Caco-2 (cell line): ENCODE measurements at regions of chr4 and their contacts with region 1.

Region 1: DNA sequence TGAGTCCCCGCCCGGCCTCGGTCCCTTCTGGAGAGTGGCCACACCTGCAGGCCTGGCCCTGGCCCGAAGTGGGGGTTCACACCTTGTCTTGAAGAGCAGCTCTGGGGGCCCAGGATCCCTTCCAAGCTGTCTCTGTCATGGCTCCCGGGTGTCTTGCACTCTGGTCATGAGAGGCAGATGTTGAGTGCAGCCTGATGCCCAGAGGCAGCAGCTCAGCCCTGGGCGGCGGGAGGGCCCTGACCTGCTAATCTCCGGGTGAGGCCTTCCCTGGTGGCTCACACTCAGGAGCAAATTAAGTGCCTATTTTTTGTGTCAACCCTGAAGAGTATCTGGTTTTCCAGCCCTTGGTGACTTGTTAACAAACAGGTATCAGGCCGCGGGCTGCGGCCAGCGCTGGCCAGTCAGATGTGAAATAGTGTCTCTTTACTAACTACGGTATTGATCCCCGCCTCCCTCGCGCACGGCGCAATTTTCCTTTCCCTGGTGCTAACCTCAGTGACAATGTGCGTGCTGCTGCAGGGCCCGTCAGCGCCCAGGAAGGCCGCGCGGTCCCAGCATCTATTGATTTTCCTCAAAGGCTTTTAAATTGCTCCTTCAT is 24.2 kb downstream of the NKX1-1 start:
- DNase-seq: no peak
- H3K4me3 ChIP-seq: no peak overlapping the region
- H3K4me3 Mint-ChIP-seq: no peak overlapping the region
- H3K27ac Mint-ChIP-seq: no peak overlapping the region
- H3K4me1 ChIP-seq: no peaks in the 10 kb centered on the region
- H3K4me1 Mint-ChIP-seq: no peaks in the 10 kb centered on the region
- H3K27me3 ChIP-seq: no peaks in the 10 kb centered on the region
- H3K27me3 Mint-ChIP-seq: no peaks in the 10 kb centered on the region
- CTCF ChIP-seq: no peak

Region 2: DNA sequence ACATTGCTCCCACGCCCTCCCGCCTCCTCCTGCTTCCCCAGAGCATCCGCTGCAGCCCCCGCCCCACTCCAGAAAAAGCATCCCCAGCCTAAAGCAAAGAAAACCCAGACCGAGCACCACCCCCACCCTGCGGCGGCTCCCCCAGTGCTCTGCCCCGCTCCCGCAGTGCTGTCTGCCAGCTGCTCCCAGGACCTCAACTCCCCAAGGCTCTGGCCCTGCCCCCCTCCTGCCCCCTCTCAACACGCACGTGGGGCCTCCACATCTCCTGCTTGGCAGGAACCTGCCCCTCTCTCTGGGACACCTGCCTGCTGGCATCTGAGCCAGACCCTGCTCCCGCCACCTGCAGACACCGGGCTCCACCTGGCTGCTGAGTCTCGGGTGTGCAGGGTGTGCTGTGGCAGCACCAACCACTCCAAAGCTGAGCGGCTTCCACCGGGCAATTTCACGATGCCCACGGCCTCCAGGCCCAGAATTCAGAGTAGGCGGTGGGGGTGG is 222.7 kb after region 1 on chr4:
- CTCF ChIA-PET with region 1: interaction called, 13 read pairs
- POLR2A ChIA-PET with region 1: no interaction called
- intact Hi-C with region 1: no loop called
- DNase-seq: peak; percentile 56 to 57
- H3K4me3 ChIP-seq: no peak overlapping the region
- H3K4me3 Mint-ChIP-seq: peak overlapping the region; percentile 55
- H3K27ac Mint-ChIP-seq: no peak overlapping the region
- H3K4me1 ChIP-seq: peaks cover 3% of the 10 kb centered on the region; the same call in 1 of the 2 replicates
- H3K4me1 Mint-ChIP-seq: peaks cover 8% of the 10 kb centered on the region
- H3K27me3 ChIP-seq: no peaks in the 10 kb centered on the region
- H3K27me3 Mint-ChIP-seq: peaks cover 10% of the 10 kb centered on the region
- CTCF ChIP-seq: peak in 1 of 2 experiments; percentile 67